SK-N-SH (cell line): ENCODE measurements at regions of chr15 and their contacts with region 1.

Region 1: GRCh38 chr15:84716036-84716799 is at the start of gene SEC11A:
- DNase-seq: peak; percentile 97
- H3K4me3 ChIP-seq: peak within 1 kb of the TSS; percentile 68 to 90
- H3K27ac ChIP-seq: peak within 1 kb of the TSS; percentile 92 to 93
- H3K4me1 ChIP-seq: peaks cover 5 to 7% of the 10 kb centered on the region in 2 experiments; a peak in 3 of 4 replicates
- H3K27me3 ChIP-seq: no peaks in the 10 kb centered on the region
- CTCF ChIP-seq: no peak
- EP300 ChIP-seq: peak in 1 of 2 experiments; percentile 18; a peak in 1 of 4 replicates
- RAD21 ChIP-seq: no peak
- polyA plus RNA-seq, gene SEC11A: 107 and 134 TPM in 2 replicates

Region 2: DNA sequence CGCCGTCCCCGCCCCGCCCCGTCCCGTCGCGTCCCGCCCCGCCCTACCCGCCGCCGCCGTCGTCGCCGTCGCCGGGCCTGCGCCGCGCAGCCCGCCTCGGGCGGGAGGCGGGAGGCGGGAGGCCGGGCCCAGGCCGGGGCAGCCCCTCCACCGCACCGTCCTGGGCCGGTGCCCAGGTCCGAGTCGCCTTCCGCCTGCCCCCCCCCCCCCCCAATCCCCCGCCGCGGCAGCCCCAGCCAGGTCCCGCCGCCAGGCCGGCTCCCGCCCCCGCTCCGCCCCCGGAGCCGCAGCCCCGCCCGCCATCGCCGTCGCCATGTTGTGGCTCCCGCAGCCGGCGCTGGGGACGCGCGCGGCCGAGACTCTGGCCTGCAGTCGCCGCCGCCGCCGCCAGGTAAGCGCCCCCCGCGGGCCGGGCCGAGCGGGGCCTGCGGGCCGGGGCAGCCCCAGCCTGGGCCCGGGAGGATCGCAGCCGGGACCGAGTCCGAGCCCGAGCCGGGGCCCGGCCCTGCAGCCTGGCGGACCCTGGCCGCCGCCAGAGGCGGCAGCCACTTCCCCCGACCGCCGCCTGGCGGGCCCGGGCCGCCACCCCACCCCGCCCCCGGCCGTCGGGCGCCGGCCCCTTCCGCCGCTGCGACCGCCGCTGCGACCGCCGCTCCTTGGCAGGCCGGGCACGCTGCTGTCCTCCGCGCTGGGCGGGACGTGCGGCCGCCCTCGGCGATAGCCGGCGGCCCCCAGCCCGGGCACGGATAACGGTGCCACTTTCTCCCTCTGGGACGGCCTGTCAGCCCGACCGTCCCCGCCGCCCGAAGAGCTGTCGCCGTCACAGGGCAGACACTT is 32.3 kb after region 1 on chr15 and contains the start of gene ZNF592:
- CTCF ChIA-PET with region 1: interaction called, 10 read pairs
- POLR2A ChIA-PET with region 1: interaction called, 14 read pairs
- DNase-seq: peak; percentile 92
- H3K4me3 ChIP-seq: peak within 1 kb of the TSS; percentile 82 to 90
- H3K27ac ChIP-seq: peak within 1 kb of the TSS; percentile 93 to 95
- H3K4me1 ChIP-seq: peaks cover 7 to 21% of the 10 kb centered on the region in 2 experiments; a peak in 3 of 4 replicates
- H3K27me3 ChIP-seq: no peaks in the 10 kb centered on the region
- CTCF ChIP-seq: no peak; the same call in 1 of the 2 replicates
- EP300 ChIP-seq: no peak
- RAD21 ChIP-seq: no peak
- polyA plus RNA-seq, gene ZNF592: 8.0 and 8.7 TPM in 2 replicates

Region 3: DNA sequence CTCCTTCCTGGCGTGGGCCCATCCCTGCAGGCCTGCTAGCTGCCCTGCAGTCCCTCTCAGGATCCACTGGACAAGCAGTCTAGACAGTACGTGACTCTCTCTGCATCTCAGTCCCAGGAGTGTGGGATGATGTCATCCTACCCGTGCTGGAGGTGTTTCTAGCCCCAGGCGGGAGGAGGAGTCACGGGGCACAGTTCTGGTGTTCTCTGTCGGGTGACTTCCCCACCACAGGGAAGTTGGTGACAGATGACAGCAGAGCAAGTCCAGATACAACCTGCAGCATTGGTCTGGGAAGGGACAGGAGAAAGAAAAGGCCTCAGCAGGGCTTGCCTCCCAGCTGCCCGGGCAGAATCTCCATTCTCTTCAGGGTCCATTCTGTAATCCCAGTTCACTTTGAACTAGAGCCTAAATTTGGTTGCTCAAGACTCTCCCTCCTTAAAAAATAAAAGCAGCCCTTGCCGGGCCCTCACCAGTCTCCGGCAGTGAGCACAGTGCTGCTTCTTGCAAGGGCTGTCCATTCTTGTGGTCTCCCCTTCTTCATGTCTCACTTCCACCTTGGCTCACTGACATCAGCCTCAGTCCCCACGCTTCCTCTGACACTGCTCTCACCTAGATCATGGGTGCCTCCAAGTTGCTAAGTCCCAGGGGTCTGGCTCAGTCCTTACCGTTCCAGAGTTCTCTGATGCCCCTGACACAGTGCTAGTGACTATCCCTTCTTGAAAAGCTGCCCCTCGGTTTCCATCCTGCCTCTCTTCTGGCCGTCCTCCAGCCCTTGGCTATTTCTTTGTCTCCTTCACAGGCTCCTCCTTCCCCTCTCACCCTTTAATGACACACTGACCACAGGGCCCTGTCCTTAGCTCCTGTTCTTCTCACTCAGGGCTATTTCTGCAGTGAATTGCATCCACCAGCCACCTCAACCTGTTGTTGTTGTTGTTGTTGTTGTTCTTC is 199.1 kb after region 1 on chr15:
- CTCF ChIA-PET with region 1: no interaction called
- POLR2A ChIA-PET with region 1: interaction called, 11 read pairs
- DNase-seq: peak; percentile 90
- H3K4me3 ChIP-seq: no peak overlapping the region
- H3K27ac ChIP-seq: peak overlapping the region; percentile 71 to 89
- H3K4me1 ChIP-seq: peaks cover 38 to 42% of the 10 kb centered on the region in 2 experiments; a peak in 3 of 4 replicates
- H3K27me3 ChIP-seq: no peaks in the 10 kb centered on the region
- CTCF ChIP-seq: no peak
- EP300 ChIP-seq: peak in 1 of 2 experiments; percentile 76; a peak in 2 of 4 replicates
- RAD21 ChIP-seq: no peak; the same call in 1 of the 2 replicates